Body of pancreas (tissue), 4 donors: ENCODE measurements at regions of chr9 and their contacts with region 1.

Region 1: DNA sequence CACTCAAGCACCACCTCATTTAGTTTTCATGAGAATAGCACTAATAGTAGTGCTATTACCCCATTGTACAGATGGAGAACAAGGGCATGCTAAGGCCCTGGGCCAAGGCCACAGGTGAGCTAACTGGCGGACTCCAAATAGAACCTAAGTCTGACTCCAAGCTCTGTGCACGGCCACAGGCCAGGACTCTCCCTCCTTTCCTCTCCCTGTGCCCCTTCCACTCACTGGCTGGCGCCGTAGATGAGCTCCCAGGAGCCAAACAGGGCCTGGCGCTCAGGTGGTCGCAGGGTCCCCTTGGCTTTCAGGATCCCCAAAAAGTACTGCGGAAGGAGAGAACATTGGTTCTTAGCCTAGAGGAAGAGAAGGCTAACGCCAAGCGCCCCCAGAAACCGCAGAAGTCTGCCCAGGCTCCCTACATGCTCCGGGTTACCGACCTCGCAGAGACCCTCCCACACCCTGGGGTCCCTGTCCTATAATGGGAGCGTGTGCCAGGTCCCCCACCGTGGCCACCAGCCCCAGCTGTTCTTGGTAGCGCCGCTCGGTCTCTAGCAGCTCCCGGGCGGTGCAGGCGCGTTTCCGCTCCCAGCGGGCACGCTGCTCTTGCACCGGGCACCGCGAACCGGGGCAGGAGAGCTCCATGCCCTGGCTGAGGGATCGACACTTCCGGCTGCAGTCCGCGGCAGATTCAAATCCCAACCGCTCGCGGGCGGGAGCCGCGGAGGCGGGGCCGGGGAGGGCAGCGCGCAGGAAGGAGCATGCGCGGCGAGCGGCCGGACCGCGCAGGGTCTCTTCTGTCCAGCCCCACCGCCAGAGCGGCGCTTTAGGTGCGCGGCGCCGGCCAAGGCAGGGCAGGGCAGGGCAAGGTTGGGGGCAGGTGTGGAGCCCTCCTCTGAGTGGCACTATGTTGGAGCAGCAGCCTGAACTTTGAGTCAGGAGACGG is at the start of gene ARHGEF39:
- DNase-seq: peak; percentile 85 to 88 (median 86)
- ATAC-seq: peak; percentile 87
- H3K4me3 ChIP-seq: peak within 1 kb of the TSS in 1 of 2 donors; percentile 12
- H3K27ac ChIP-seq: peak within 1 kb of the TSS; percentile 3 to 72 (median 37)
- H3K4me1 ChIP-seq: peaks cover 49% of the 10 kb centered on the region
- H3K27me3 ChIP-seq: no peaks in the 10 kb centered on the region
- CTCF ChIP-seq: peak in 5 of 7 experiments; percentile 14 to 41 (median 33)
- POLR2A ChIP-seq: peak; percentile 13 to 66 (median 47)
- total RNA-seq, gene ARHGEF39: 0.26 TPM in 1 of 2 donors, not detected in the other

Region 2: GRCh38 chr9:35696525-35697215 is 31.9 kb after region 1 on chr9:
- intact Hi-C with region 1: loop called (anchors 5 kb)
- DNase-seq: peak; percentile 75 to 80 (median 78)
- ATAC-seq: peak; percentile 78
- H3K4me3 ChIP-seq: no peak overlapping the region
- H3K27ac ChIP-seq: peak overlapping the region; percentile 23 to 73 (median 54)
- H3K4me1 ChIP-seq: peaks cover 28% of the 10 kb centered on the region
- H3K27me3 ChIP-seq: no peaks in the 10 kb centered on the region
- CTCF ChIP-seq: peak; percentile 86 to 93 (median 90)
- POLR2A ChIP-seq: peak in 1 of 3 donors; percentile 22

Region 3: GRCh38 chr9:35814841-35815543 is 150.2 kb after region 1 on chr9 and contains the start of gene HINT2:
- intact Hi-C with region 1: no loop called
- DNase-seq: peak; percentile 97 to 98 (median 98)
- ATAC-seq: peak; percentile 87
- H3K4me3 ChIP-seq: peak within 1 kb of the TSS; percentile 76 to 98
- H3K27ac ChIP-seq: peak within 1 kb of the TSS; percentile 97 to 99 (median 98)
- H3K4me1 ChIP-seq: peaks cover 33% of the 10 kb centered on the region
- H3K27me3 ChIP-seq: no peaks in the 10 kb centered on the region
- CTCF ChIP-seq: peak in 2 of 7 experiments; percentile 2 to 3
- POLR2A ChIP-seq: peak; percentile 89 to 95 (median 94)
- total RNA-seq, gene HINT2: 33.3 to 35.0 TPM